CD8-positive, alpha-beta T cell (primary cell): ENCODE measurements at regions of chr15 and their contacts with region 1.

Region 1: DNA sequence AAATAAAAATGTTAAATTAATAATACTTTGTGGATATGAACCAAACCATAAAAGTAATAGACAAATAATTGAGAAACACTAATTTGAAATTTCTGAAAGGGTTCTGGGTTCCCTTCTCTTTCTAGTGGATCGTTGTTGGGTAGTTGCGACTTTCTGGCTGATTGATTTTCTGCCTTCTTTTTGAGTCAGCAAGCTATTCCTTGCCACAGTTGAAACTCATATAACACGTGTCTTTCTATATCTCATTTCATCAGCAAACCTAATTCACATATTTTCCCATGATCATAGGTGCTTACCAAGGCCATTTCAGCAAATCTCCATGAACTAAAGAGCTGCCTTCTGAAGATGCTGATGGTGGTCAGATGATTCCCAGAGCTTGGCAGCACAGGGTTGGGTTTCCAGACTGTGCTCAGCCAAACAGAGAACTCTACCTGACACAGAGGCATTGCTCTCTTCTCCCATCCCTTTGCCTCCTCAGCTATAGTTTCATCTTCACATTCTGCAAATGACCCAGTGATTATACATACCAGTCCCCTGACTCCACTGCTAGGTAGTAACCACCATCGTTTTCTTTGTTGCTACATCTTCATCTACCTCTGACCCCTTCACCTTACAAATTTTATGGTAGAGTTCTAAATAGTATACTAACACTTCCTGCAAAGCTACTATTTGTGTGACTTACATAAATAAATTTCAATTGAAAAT is 383.9 kb upstream of the DPH6 start:
- DNase-seq: no peak
- ATAC-seq: no peak
- H3K4me3 ChIP-seq: no peak overlapping the region
- H3K4me3 Mint-ChIP-seq: no peak overlapping the region
- H3K27ac ChIP-seq: no peak overlapping the region
- H3K27ac Mint-ChIP-seq: no peak overlapping the region
- H3K4me1 ChIP-seq: no peaks in the 10 kb centered on the region
- H3K4me1 Mint-ChIP-seq: no peaks in the 10 kb centered on the region
- H3K27me3 ChIP-seq: no peaks in the 10 kb centered on the region
- H3K27me3 Mint-ChIP-seq: no peaks in the 10 kb centered on the region
- CTCF ChIP-seq: no peak

Region 2: DNA sequence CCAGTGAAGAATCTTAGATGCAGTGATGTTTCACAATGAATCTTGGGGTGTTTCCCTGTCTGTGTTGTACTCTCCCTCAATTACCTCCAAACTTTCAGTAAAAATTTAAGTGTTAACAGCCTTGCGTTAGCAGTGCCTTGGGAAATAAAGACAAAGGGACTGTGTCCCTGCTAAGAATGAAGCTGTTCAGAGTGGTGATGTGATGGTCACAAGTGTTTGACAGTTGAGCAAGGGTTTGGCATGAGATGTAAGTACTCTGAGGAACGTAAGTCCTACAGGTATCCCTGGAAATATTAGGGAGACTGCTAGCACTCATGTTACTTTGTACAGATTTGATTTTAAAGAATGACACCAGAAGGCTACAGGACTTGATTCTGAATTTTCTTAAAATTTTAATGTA is 79.6 kb before region 1 on chr15:
- CTCF ChIA-PET with region 1: no interaction called
- POLR2A ChIA-PET with region 1: no interaction called
- intact Hi-C with region 1: no loop called
- DNase-seq: no peak
- ATAC-seq: no peak
- H3K4me3 ChIP-seq: no peak overlapping the region
- H3K4me3 Mint-ChIP-seq: no peak overlapping the region
- H3K27ac ChIP-seq: no peak overlapping the region
- H3K27ac Mint-ChIP-seq: no peak overlapping the region
- H3K4me1 ChIP-seq: no peaks in the 10 kb centered on the region
- H3K4me1 Mint-ChIP-seq: no peaks in the 10 kb centered on the region
- H3K27me3 ChIP-seq: no peaks in the 10 kb centered on the region
- H3K27me3 Mint-ChIP-seq: peaks cover 8% of the 10 kb centered on the region
- CTCF ChIP-seq: no peak

Region 3: DNA sequence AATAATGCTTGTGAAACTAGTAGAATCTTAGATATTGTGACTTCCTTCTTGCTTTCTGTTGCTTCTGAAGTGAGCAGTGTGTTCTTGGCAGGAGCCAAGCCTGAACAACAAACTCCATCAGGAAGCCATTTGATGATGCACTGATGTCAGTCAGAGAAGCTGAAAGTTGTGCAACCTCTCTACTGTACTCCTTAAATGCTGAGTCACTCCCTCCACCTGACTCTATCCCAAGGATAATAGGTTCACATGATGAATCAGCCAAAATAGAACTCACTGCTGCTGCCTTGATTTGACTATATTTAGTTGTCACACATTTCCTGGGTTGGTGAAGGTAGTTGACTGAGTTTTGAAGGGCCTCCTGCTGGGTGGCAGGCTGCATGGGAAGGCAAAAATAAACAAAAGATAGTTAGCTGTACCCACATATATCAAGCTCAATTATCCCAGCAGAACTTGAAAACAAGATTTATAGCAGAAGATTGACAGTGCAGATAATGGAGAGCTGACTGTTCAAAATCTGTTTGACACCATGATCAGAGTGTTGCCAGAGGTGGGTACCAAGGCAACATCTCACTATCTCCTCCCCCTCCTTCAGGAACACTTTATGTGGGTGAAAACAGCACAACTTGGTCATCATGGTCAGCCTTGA is 55.5 kb before region 1 on chr15:
- CTCF ChIA-PET with region 1: no interaction called
- POLR2A ChIA-PET with region 1: no interaction called
- intact Hi-C with region 1: loop called in 1 of 2 experiments (anchors 10 kb)
- DNase-seq: no peak
- ATAC-seq: no peak
- H3K4me3 ChIP-seq: no peak overlapping the region
- H3K4me3 Mint-ChIP-seq: no peak overlapping the region
- H3K27ac ChIP-seq: no peak overlapping the region
- H3K27ac Mint-ChIP-seq: no peak overlapping the region
- H3K4me1 ChIP-seq: no peaks in the 10 kb centered on the region
- H3K4me1 Mint-ChIP-seq: no peaks in the 10 kb centered on the region
- H3K27me3 ChIP-seq: no peaks in the 10 kb centered on the region
- H3K27me3 Mint-ChIP-seq: no peaks in the 10 kb centered on the region
- CTCF ChIP-seq: no peak

Region 4: GRCh38 chr15:35944945-35945585 is 15.2 kb after region 1 on chr15:
- CTCF ChIA-PET with region 1: no interaction called
- POLR2A ChIA-PET with region 1: no interaction called
- intact Hi-C with region 1: no loop called
- DNase-seq: no peak
- ATAC-seq: no peak
- H3K4me3 ChIP-seq: no peak overlapping the region
- H3K4me3 Mint-ChIP-seq: no peak overlapping the region
- H3K27ac ChIP-seq: no peak overlapping the region
- H3K27ac Mint-ChIP-seq: no peak overlapping the region
- H3K4me1 ChIP-seq: no peaks in the 10 kb centered on the region
- H3K4me1 Mint-ChIP-seq: no peaks in the 10 kb centered on the region
- H3K27me3 ChIP-seq: no peaks in the 10 kb centered on the region
- H3K27me3 Mint-ChIP-seq: no peaks in the 10 kb centered on the region
- CTCF ChIP-seq: no peak